Astrocyte of the cerebellum (primary cell): ENCODE measurements at regions of chr4 and their contacts with region 1.

Region 1: DNA sequence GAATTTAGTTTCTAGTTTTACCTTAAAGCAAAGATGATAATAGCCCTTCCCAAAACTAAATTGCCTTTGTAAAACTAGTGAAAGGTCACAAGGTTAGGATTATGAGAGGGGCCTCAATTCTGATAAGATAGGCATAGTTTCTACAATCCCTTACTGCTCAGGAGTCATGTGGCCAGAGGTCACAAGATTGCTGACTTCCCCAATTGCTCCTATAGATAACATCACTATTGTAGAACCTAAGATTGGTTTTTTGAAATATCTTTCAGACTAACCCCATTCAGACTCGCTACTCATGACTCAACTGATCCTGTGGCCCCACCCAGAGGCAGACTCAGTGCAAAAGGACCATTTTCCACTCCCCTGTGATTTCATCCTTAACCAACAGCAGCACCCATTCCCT is 70.3 kb downstream of the SCD5 start:
- DNase-seq: no peak
- H3K4me3 ChIP-seq: no peak overlapping the region
- CTCF ChIP-seq: no peak

Region 2: DNA sequence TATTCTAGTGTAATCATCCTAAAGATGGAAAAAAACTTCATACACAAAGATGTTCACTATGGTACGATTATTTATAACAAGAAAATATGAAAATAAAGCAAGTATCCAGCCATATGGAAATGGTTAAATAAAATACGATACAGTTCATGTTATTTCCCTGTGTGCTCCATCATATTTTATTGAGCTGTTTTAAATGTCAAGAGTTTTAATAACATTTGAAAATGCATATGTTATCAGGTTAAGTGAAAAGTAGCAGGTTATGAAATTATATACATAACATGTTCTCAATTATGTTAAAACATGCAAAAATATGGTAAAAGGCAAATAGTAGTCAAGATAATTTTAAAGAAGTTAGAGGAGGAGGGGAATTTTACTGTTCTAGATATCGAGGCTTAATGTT is 546.5 kb before region 1 on chr4:
- in situ Hi-C with region 1: no loop called
- DNase-seq: no peak
- H3K4me3 ChIP-seq: no peak overlapping the region
- CTCF ChIP-seq: no peak

Region 3: DNA sequence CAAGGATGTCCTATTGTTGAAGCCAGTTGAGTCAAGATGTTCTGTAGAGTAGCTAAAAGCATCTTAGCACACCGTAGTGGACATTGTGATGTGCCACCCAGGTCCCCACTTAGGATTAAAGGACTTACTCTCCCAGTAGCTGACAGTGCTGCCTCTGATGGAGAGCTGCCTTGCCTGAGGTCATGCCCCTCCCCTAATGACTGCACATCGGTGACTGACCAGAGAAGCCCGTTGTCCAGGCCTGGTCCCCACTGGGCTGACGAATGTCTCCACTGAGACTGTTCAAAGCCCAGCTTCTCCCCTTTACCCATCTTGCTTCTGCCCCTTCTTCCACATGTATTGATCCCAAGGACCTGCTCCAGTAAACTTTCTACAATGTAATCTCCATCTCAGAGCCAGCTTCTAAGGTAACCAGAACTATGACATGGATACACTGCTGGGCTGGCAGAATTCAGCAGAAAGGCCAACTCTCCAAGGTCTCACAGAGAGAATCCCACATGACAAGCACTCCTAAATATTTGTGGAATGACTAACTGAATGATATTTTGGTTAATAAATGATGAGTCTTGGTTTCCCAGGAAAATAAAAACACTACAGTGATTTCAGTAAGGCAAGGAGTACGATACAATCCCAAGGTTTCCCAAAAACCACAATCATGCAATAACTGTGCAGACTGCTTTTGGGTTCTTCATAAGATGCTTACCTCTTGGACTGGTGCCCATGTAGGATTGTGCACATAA is 84.1 kb before region 1 on chr4:
- in situ Hi-C with region 1: no loop called
- DNase-seq: peak; percentile 85
- H3K4me3 ChIP-seq: no peak overlapping the region
- CTCF ChIP-seq: no peak

Region 4: GRCh38 chr4:82774711-82775171 is 46.4 kb after region 1 on chr4:
- in situ Hi-C with region 1: loop called (anchors 5 kb)
- DNase-seq: no peak
- H3K4me3 ChIP-seq: no peak overlapping the region
- CTCF ChIP-seq: no peak

Region 5: DNA sequence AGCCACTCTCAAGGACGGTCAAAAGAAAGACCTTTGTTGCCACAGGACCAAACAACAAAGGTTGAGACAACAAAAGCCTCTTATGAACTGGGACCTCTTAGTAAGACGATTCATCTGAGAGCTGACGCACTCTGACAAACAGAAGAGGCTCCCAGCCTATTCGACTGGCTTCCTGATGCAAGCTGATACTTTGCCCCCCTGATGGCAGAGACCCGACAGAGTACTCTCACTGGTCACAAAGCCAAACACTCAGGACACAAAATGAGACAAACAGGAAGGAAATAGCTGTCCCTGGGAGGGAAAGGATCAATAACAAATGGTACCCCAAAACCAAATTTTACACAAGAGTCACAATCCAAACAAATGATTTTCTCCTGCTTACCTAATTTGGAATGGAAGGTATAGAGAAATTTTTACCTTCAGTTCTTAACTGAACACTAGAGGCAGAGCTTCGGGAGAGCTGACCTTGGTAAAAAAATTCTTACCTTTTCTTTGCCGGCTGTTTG is 461.4 kb after region 1 on chr4:
- in situ Hi-C with region 1: no loop called
- DNase-seq: no peak
- H3K4me3 ChIP-seq: no peak overlapping the region
- CTCF ChIP-seq: no peak